ENCODE measurements at regions of chr17 and their contacts with region 1.

Region 1: DNA sequence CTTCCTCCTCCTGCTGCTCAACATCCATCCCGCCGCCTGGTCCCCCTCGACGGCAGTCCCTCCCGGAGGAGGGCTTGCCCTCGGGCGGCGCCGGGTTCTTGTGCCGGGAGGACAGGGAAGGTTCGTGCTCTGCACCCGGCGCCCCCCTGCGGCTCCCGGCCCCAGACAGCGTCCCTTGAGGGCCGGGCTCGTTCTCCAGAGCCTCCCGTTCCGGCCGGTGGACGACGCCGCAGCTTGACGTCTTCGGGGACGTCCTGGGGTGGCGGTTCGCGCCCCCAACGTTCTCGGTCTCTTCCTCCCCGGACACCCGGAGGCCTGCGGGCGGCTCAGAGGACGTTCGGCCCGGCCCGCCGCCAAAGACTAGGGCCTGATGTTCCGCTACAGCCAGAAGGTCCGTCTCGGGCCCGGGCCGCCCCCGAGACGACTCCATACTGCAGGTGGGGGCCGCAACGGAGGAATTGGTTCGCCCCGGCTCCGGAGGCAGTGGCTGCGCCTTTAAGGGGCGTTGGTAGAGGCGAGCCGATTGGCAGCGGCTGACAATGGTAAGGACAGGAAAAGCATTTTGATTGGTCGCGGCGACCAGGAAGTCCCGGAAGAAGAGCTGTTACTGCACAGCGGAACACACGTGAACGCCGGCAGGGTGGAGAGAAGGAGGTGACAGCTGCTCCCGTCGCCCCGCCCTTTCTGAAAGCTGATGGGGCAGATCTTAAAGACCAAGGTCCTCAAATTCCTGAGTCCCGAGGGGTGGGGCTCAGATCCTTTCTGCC is at the start of gene BORCS6:
- DNase-seq: peak; percentile 94
- ATAC-seq: peak; percentile 75
- H3K4me3 ChIP-seq: peak within 1 kb of the TSS; percentile 75
- H3K27ac ChIP-seq: peak within 1 kb of the TSS; percentile 90
- H3K4me1 ChIP-seq: peaks cover 17% of the 10 kb centered on the region
- H3K27me3 ChIP-seq: no peaks in the 10 kb centered on the region
- CTCF ChIP-seq: peak in 2 of 3 experiments; percentile 8 to 16; a peak in 2 of 6 replicates
- EP300 ChIP-seq: no peak
- POLR2A ChIP-seq: peak; percentile 90
- RAD21 ChIP-seq: no peak
- polyA plus RNA-seq, gene BORCS6: 0.37 to 0.64 TPM

Region 2: GRCh38 chr17:8156246-8156992 is 33.5 kb before region 1 on chr17:
- CTCF ChIA-PET with region 1: interaction called, 8 read pairs
- POLR2A ChIA-PET with region 1: interaction called, 71 read pairs
- RAD21 ChIA-PET with region 1: interaction called, 10 read pairs
- SMC1A ChIA-PET with region 1: interaction called, 10 read pairs
- in situ Hi-C with region 1: no loop called
- intact Hi-C with region 1: no loop called
- DNase-seq: peak; percentile 100
- ATAC-seq: peak; percentile 83
- H3K4me3 ChIP-seq: peak overlapping the region; percentile 86
- H3K27ac ChIP-seq: peak overlapping the region; percentile 94
- H3K4me1 ChIP-seq: peaks cover 21% of the 10 kb centered on the region
- H3K27me3 ChIP-seq: no peaks in the 10 kb centered on the region
- CTCF ChIP-seq: peak in 1 of 3 experiments; percentile 23; a peak in 1 of 6 replicates
- EP300 ChIP-seq: peak; percentile 0 to 53; a peak in 3 of 4 replicates
- POLR2A ChIP-seq: peak; percentile 87
- RAD21 ChIP-seq: no peak

Region 3: GRCh38 chr17:8204761-8205555 is 15.1 kb after region 1 on chr17:
- CTCF ChIA-PET with region 1: interaction called, 6 read pairs
- POLR2A ChIA-PET with region 1: interaction called, 71 read pairs
- RAD21 ChIA-PET with region 1: interaction called, 40 read pairs
- SMC1A ChIA-PET with region 1: interaction called, 16 read pairs
- in situ Hi-C with region 1: no loop called
- intact Hi-C with region 1: no loop called
- DNase-seq: no peak
- ATAC-seq: no peak
- H3K4me3 ChIP-seq: no peak overlapping the region
- H3K27ac ChIP-seq: no peak overlapping the region
- H3K4me1 ChIP-seq: no peaks in the 10 kb centered on the region
- H3K27me3 ChIP-seq: no peaks in the 10 kb centered on the region
- CTCF ChIP-seq: no peak
- EP300 ChIP-seq: no peak
- POLR2A ChIP-seq: peak; percentile 69
- RAD21 ChIP-seq: no peak

Region 4: DNA sequence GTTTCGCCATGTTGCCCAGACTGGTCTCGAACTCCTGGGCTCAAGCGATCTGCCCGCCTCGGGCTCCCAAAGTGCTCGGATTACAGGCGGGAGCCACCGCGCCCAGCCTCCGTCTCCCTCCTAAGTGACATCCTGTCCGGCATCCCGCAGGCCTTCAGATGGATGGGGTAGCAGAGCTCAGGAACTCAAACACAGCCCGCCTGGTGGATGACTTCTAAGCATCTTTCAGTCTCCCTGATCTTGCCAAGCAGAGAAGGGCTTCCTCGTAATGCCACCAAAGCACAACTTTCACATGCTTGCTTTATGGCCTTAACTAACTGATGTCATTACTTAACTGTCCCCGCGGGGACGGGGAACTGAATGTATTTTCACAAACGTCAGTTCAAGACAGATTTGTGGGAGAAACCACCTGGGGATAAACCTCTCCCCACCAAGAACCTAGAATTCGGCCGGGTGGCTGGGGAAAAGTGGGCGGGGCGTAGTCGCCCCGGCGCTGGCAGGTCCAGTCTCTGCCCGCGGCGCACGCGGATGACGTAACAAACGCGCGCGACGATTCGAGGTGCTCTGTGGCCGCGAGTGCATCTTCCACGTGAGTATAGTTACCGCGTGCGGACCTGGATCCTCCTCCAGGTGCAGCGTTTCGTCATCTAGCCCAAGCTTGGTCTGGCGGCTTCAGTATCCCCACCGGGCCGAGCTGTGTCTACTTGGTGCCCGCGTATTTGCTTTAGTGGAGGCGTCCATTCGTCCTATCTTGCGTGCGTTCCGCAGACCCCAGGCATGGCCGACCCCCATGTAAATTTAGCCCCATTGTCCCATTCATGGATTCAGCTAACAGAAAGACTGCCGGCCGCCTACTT is 59.1 kb after region 1 on chr17 and contains the start of gene PFAS:
- CTCF ChIA-PET with region 1: interaction called, 3 read pairs
- POLR2A ChIA-PET with region 1: interaction called, 31 read pairs
- RAD21 ChIA-PET with region 1: interaction called, 18 read pairs
- SMC1A ChIA-PET with region 1: interaction called, 8 read pairs
- in situ Hi-C with region 1: no loop called
- intact Hi-C with region 1: loop called (anchors 2 kb)
- DNase-seq: peak; percentile 79
- ATAC-seq: peak; percentile 64
- H3K4me3 ChIP-seq: peak within 1 kb of the TSS; percentile 100
- H3K27ac ChIP-seq: peak within 1 kb of the TSS; percentile 100
- H3K4me1 ChIP-seq: peaks cover 10% of the 10 kb centered on the region
- H3K27me3 ChIP-seq: no peaks in the 10 kb centered on the region
- CTCF ChIP-seq: no peak
- EP300 ChIP-seq: peak; percentile 30 to 57; a peak in 2 of 4 replicates
- POLR2A ChIP-seq: peak; percentile 92
- RAD21 ChIP-seq: no peak
- polyA plus RNA-seq, gene PFAS: 13.9 to 16.1 TPM

Region 5: GRCh38 chr17:8268550-8269298 is 78.8 kb after region 1 on chr17:
- CTCF ChIA-PET with region 1: no interaction called
- POLR2A ChIA-PET with region 1: no interaction called
- RAD21 ChIA-PET with region 1: no interaction called
- SMC1A ChIA-PET with region 1: no interaction called
- in situ Hi-C with region 1: no loop called
- intact Hi-C with region 1: no loop called
- DNase-seq: no peak
- ATAC-seq: no peak
- H3K4me3 ChIP-seq: no peak overlapping the region
- H3K27ac ChIP-seq: no peak overlapping the region
- H3K4me1 ChIP-seq: no peaks in the 10 kb centered on the region
- H3K27me3 ChIP-seq: no peaks in the 10 kb centered on the region
- CTCF ChIP-seq: no peak
- EP300 ChIP-seq: no peak
- POLR2A ChIP-seq: no peak
- RAD21 ChIP-seq: no peak

Region 6: GRCh38 chr17:8300627-8301242 is 110.8 kb after region 1 on chr17:
- CTCF ChIA-PET with region 1: interaction called, 5 read pairs
- POLR2A ChIA-PET with region 1: interaction called, 11 read pairs
- RAD21 ChIA-PET with region 1: interaction called, 8 read pairs
- SMC1A ChIA-PET with region 1: interaction called, 7 read pairs
- in situ Hi-C with region 1: no loop called
- intact Hi-C with region 1: loop called (anchors 1 kb)
- DNase-seq: peak; percentile 31
- ATAC-seq: peak; percentile 98
- H3K4me3 ChIP-seq: no peak overlapping the region
- H3K27ac ChIP-seq: no peak overlapping the region
- H3K4me1 ChIP-seq: no peaks in the 10 kb centered on the region
- H3K27me3 ChIP-seq: no peaks in the 10 kb centered on the region
- CTCF ChIP-seq: peak; percentile 86 to 96 (median 90); a peak in 5 of 6 replicates
- EP300 ChIP-seq: no peak
- POLR2A ChIP-seq: no peak
- RAD21 ChIP-seq: peak; percentile 90

Region 7: DNA sequence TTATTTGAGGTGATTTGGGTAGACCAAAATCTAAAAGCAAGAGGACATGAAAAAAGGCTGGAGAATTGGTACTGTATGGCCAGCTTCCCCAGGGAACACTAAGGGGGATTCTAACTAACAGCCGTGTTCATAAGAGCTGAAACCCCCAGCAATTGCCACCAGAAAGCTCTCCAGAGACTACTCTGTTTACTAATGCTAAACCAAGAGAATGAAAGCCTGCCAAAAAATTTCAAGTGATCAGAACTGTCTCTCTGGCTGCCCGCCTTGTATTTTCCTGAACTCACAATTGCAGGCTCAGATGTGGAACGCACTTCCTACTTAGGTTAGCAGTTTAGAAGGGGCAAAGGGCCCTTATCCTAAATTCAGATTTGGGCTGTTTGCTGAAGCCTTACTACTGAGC is 416.5 kb after region 1 on chr17:
- CTCF ChIA-PET with region 1: no interaction called
- POLR2A ChIA-PET with region 1: no interaction called
- RAD21 ChIA-PET with region 1: no interaction called
- SMC1A ChIA-PET with region 1: no interaction called
- in situ Hi-C with region 1: no loop called
- intact Hi-C with region 1: no loop called
- DNase-seq: no peak
- ATAC-seq: no peak
- H3K4me3 ChIP-seq: no peak overlapping the region
- H3K27ac ChIP-seq: no peak overlapping the region
- H3K4me1 ChIP-seq: no peaks in the 10 kb centered on the region
- H3K27me3 ChIP-seq: no peaks in the 10 kb centered on the region
- CTCF ChIP-seq: no peak
- EP300 ChIP-seq: no peak
- POLR2A ChIP-seq: no peak
- RAD21 ChIP-seq: no peak